ENCODE measurements at regions of chr19 and their contacts with region 1.

Region 1: DNA sequence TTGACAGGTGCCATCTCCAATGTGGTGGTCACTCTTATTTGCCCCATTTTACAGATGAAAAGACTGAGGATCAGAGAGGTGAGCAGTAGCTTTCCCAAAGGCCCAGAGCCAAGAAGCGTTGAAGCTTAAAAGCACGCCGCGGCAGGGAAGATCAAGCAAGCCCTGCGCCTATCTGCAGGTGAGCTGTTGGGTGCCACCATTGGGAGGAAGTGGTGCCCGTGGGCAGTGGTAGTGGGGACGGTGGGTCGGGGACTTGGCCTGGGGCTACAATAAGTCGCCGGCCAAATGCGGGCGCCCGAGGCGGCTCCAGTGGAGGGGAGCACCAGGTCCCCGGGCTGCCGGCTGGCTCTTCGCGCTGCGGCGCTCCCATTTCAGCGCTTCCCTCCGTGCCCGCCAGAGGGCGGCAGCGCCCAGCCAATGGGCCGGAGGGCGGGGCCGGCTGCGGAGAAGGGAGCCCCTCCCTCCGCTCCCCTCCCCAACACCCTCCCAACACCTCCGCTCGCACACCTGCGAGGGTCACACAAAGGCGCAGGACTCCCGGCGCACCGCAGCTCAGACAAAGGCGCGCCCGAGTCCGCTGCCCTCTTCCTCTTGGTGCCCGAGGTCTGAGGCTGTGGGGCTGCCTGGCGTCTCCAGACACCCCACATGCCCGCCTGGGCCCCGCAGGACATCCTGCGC is 744 bp upstream of the POU2F2 start:
- DNase-seq: peak; percentile 82
- ATAC-seq: peak; percentile 71
- H3K4me3 Mint-ChIP-seq: peak overlapping the region; percentile 86
- H3K27ac Mint-ChIP-seq: peak overlapping the region; percentile 65
- H3K4me1 Mint-ChIP-seq: peaks cover 65% of the 10 kb centered on the region
- H3K27me3 Mint-ChIP-seq: no peaks in the 10 kb centered on the region

Region 2: DNA sequence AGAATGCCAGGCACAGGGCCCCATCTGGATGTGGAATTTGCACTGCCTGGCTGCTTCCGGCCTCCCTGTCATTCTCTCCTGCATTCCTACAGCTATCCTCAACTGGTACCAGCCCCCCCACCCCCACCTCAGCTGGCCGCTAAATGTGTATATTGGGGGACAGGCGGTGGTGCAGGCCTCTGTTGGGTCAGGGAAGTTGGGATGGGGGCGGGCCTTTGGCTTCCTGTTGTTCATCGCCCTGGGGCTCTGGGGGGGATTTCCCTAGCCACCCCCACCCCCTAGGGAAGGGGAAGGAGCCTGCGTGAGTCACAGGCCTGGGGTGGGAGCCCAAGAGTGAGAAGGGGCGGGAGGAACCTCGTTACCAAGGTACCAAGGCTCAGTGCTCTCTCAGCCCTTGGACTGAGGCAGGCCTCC is 11.3 kb before region 1 on chr19:
- CTCF ChIA-PET with region 1: interaction called, 46 read pairs
- POLR2A ChIA-PET with region 1: interaction called, 4 read pairs
- DNase-seq: peak; percentile 70
- ATAC-seq: peak; percentile 66
- H3K4me3 Mint-ChIP-seq: peak overlapping the region; percentile 57
- H3K27ac Mint-ChIP-seq: peak overlapping the region; percentile 92
- H3K4me1 Mint-ChIP-seq: peaks cover 53% of the 10 kb centered on the region
- H3K27me3 Mint-ChIP-seq: no peaks in the 10 kb centered on the region

Region 3: GRCh38 chr19:42184401-42184861 is 51.4 kb after region 1 on chr19:
- CTCF ChIA-PET with region 1: interaction called, 31 read pairs
- POLR2A ChIA-PET with region 1: interaction called, 4 read pairs
- DNase-seq: peak; percentile 74
- ATAC-seq: peak; percentile 57
- H3K4me3 Mint-ChIP-seq: no peak overlapping the region
- H3K27ac Mint-ChIP-seq: peak overlapping the region; percentile 65
- H3K4me1 Mint-ChIP-seq: peaks cover 36% of the 10 kb centered on the region
- H3K27me3 Mint-ChIP-seq: peaks cover 5% of the 10 kb centered on the region

Region 4: DNA sequence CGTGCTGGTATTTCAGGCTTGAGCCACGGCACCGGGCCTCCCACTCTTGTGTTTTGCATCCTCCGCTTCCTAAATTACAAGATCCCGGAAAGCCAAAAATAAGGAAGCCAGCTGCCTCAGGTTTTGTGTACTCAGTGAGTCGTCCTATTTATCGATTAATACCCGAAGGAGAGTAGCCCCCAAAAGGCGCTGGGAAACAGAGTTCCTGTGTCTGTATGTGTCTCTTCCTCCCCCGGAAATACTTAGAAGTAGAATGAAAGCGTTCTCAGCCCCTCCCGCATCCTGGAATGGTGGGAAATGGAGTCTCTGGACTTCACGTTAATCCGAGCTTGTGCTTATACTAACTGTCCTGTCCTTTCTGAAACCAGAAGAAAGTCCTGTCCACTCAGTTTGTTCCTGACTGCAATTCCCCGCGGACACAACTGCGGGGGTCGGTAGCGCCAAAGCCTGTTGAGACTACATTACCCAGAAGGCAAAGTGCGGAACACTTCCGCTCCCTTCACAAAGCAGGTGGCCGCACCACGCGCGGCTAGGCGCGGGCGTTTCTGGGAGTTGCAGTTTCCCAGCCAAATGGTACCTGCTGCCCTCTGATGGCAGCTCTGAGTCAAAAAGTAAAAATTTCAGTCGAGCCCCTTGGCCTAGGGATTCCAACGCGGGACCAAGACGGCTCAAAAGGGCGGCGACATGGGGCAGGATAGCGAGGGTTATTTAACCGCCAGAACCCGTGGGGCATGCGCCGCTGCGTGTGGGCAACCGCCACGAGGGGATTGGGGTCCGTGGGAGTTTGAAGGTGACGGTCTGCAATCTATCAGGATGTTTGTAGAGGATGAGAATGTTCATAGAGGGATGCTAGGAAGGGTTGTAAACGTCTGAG is 111.6 kb after region 1 on chr19:
- CTCF ChIA-PET with region 1: interaction called, 30 read pairs
- POLR2A ChIA-PET with region 1: no interaction called
- DNase-seq: peak; percentile 96
- ATAC-seq: peak; percentile 47
- H3K4me3 Mint-ChIP-seq: peak overlapping the region; percentile 95
- H3K27ac Mint-ChIP-seq: peak overlapping the region; percentile 96
- H3K4me1 Mint-ChIP-seq: peaks cover 48% of the 10 kb centered on the region
- H3K27me3 Mint-ChIP-seq: no peaks in the 10 kb centered on the region

Region 5: GRCh38 chr19:42323473-42323851 is 190.5 kb after region 1 on chr19:
- CTCF ChIA-PET with region 1: interaction called, 10 read pairs
- POLR2A ChIA-PET with region 1: no interaction called
- DNase-seq: no peak
- ATAC-seq: no peak
- H3K4me3 Mint-ChIP-seq: peak overlapping the region; percentile 3
- H3K27ac Mint-ChIP-seq: no peak overlapping the region
- H3K4me1 Mint-ChIP-seq: peaks cover 23% of the 10 kb centered on the region
- H3K27me3 Mint-ChIP-seq: peaks cover 24% of the 10 kb centered on the region